ENCODE measurements at regions of chr3 and their contacts with region 1.

Region 1: GRCh38 chr3:194404365-194405140 is 5.5 kb upstream of the GP5 start:
- DNase-seq: no peak
- ATAC-seq: no peak
- H3K4me3 ChIP-seq: no peak overlapping the region
- H3K27ac ChIP-seq: no peak overlapping the region
- H3K4me1 ChIP-seq: no peaks in the 10 kb centered on the region
- H3K27me3 ChIP-seq: peaks cover 0 to 4% (median 0%) of the 10 kb centered on the region in 3 donors
- CTCF ChIP-seq: peak; percentile 73

Region 2: GRCh38 chr3:194344012-194344411 is 60.5 kb before region 1 on chr3:
- intact Hi-C with region 1: loop called in 1 of 2 experiments (anchors 2 kb)
- DNase-seq: peak; percentile 71 to 83
- ATAC-seq: peak; percentile 64 to 84 (median 70)
- H3K4me3 ChIP-seq: no peak overlapping the region
- H3K27ac ChIP-seq: no peak overlapping the region
- H3K4me1 ChIP-seq: no peaks in the 10 kb centered on the region
- H3K27me3 ChIP-seq: no peaks in the 10 kb centered on the region
- CTCF ChIP-seq: peak; percentile 94

Region 3: DNA sequence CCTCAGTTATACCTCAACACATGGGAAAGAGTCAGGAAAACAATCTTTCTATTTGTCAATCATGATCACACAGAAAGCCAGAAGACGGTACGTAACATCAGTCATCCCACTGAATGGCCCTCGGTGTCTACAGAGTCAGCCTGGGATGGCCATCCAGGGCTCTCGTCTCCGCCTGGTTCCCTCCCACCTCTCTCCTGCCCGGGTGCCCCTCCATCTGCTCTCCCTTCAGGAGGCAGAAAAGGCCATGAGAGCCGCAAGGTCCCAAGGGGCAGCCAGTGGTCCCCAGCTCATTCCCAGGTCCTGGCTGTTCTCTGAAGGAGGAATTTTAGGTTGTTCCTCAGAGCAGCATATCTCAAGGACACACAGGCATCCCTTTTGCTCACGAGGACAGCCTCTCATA is 30.7 kb before region 1 on chr3:
- intact Hi-C with region 1: loop called in 1 of 2 experiments (anchors 1 kb)
- DNase-seq: peak in 1 of 2 donors; percentile 4
- ATAC-seq: no peak
- H3K4me3 ChIP-seq: no peak overlapping the region
- H3K27ac ChIP-seq: no peak overlapping the region
- H3K4me1 ChIP-seq: no peaks in the 10 kb centered on the region
- H3K27me3 ChIP-seq: peaks cover 0 to 36% (median 2%) of the 10 kb centered on the region in 3 donors
- CTCF ChIP-seq: no peak

Measured in psoas muscle (tissue), 8 donors.